Heart left ventricle (tissue), 16 donors: ENCODE measurements at regions of chr3 and their contacts with region 1.

Region 1: GRCh38 chr3:45647148-45647619 is 42.0 kb upstream of the SACM1L start:
- DNase-seq: no peak
- ATAC-seq: peak; percentile 39 to 76 (median 72)
- H3K4me3 ChIP-seq: no peak overlapping the region
- H3K27ac ChIP-seq: peak overlapping the region in 8 of 12 donors; percentile 18 to 91 (median 46)
- H3K4me1 ChIP-seq: peaks cover 0 to 59% (median 30%) of the 10 kb centered on the region in 12 donors
- H3K27me3 ChIP-seq: no peaks in the 10 kb centered on the region
- CTCF ChIP-seq: no peak
- POLR2A ChIP-seq: no peak

Region 2: DNA sequence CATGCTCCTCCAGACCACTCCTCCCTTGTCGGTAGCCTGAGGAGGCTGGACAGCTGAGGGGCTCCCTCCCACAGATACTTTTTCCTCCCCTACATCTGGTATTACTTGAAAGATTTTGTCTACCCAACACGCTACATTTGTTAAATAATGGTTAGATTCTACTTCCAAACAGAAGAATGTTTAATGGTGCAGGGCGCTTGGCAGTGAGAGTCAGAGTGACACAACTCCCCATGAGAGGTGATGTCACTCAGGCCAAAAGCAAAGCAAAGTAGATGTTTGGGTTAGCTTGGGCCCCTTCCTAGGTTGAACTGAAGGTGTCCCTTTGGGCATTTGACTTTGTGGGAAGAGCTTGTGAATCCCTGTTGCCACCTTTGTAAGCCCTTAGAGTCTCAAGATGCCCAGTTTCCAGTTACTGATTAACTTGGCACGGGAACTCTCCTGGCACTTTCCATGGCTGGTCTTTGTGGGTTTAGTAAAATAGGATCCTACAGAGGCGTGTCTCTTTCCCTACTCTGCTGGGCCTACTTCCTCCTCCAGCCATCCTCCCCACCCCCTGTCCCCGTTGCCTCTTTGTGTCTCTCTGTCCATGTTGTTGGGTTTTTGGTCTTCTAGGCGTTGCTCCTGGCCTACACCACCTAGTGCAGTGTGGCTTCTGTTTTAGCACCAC is 47.1 kb before region 1 on chr3:
- intact Hi-C with region 1: loop called in 2 of 10 experiments (anchors 5 kb)
- DNase-seq: peak in 1 of 5 donors; percentile 32
- ATAC-seq: no peak
- H3K4me3 ChIP-seq: no peak overlapping the region
- H3K27ac ChIP-seq: peak overlapping the region in 10 of 12 donors; percentile 13 to 97 (median 56)
- H3K4me1 ChIP-seq: peaks cover 0 to 99% (median 85%) of the 10 kb centered on the region in 12 donors
- H3K27me3 ChIP-seq: no peaks in the 10 kb centered on the region
- CTCF ChIP-seq: no peak
- POLR2A ChIP-seq: no peak

Region 3: GRCh38 chr3:45612918-45613602 is 34.1 kb before region 1 on chr3:
- intact Hi-C with region 1: loop called in 1 of 10 experiments (anchors 5 kb)
- DNase-seq: no peak
- ATAC-seq: no peak
- H3K4me3 ChIP-seq: no peak overlapping the region
- H3K27ac ChIP-seq: peak overlapping the region in 1 of 12 donors; percentile 34
- H3K4me1 ChIP-seq: peaks cover 0 to 88% (median 61%) of the 10 kb centered on the region in 12 donors
- H3K27me3 ChIP-seq: no peaks in the 10 kb centered on the region
- CTCF ChIP-seq: no peak
- POLR2A ChIP-seq: no peak

Region 4: DNA sequence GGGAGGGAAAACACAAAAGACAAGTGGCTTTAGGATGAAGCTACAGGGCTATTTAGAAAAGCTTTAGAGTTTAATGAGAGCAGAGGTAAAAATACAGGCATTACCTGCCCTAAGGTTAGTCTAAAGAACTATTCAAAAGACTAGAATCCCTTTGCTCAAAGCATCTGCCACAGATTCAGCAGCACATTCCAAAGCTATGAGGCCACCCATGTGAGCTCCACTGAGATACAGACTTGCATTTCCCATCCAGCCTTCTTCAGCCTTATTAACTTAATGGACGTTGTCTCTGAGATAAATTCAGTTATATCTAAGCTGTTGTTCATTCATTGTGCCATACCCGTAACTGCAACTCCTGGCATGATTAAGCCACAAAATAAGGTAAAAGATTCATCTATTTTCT is 321.5 kb after region 1 on chr3:
- intact Hi-C with region 1: no loop called
- DNase-seq: no peak
- ATAC-seq: peak in 2 of 4 donors; percentile 41 to 44
- H3K4me3 ChIP-seq: no peak overlapping the region
- H3K27ac ChIP-seq: peak overlapping the region in 1 of 12 donors; percentile 7
- H3K4me1 ChIP-seq: peaks cover 0 to 68% (median 28%) of the 10 kb centered on the region in 12 donors
- H3K27me3 ChIP-seq: no peaks in the 10 kb centered on the region
- CTCF ChIP-seq: no peak
- POLR2A ChIP-seq: no peak